ENCODE measurements at regions of chr3 and their contacts with region 1.

Region 1: DNA sequence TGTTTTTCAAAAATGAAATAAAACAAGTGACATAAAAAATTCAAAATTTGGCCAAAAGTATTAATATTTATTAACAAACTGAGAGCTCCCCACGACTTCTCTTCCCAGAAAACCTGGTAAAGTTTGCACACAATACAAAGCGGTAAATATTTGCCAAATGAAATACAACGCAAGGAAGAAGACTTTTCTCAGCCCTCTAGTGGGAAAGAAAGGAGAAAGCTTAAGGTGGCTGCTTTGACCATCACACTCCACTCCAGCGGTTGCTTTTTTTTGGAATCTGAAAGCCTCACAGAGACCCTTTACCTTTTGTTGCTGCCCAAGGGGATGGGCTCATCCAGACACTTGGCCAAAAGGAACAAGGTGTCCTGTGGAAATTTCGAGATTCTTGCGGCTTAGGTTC is 1.1 kb upstream of the GK5 start:
- DNase-seq: peak in 1 of 14 experiments; percentile 10
- ATAC-seq: no peak
- H3K4me3 ChIP-seq: no peak overlapping the region
- H3K4me3 Mint-ChIP-seq: peak overlapping the region; percentile 95
- H3K27ac ChIP-seq: no peak overlapping the region
- H3K27ac Mint-ChIP-seq: no peak overlapping the region
- H3K4me1 ChIP-seq: peaks cover 10% of the 10 kb centered on the region
- H3K4me1 Mint-ChIP-seq: peaks cover 22% of the 10 kb centered on the region
- H3K27me3 ChIP-seq: no peaks in the 10 kb centered on the region
- H3K27me3 Mint-ChIP-seq: no peaks in the 10 kb centered on the region
- CTCF ChIP-seq: no peak

Region 2: GRCh38 chr3:142028243-142028777 is 198.2 kb before region 1 on chr3:
- CTCF ChIA-PET with region 1: no interaction called
- POLR2A ChIA-PET with region 1: no interaction called
- intact Hi-C with region 1: loop called in 1 of 2 experiments (anchors 10 kb)
- DNase-seq: peak in 5 of 14 experiments; percentile 10 to 70 (median 63)
- ATAC-seq: peak; percentile 88
- H3K4me3 ChIP-seq: peak overlapping the region; percentile 42
- H3K4me3 Mint-ChIP-seq: peak overlapping the region; percentile 96
- H3K27ac ChIP-seq: no peak overlapping the region
- H3K27ac Mint-ChIP-seq: peak overlapping the region; percentile 46
- H3K4me1 ChIP-seq: no peaks in the 10 kb centered on the region
- H3K4me1 Mint-ChIP-seq: peaks cover 36% of the 10 kb centered on the region
- H3K27me3 ChIP-seq: no peaks in the 10 kb centered on the region
- H3K27me3 Mint-ChIP-seq: no peaks in the 10 kb centered on the region
- CTCF ChIP-seq: no peak

Region 3: DNA sequence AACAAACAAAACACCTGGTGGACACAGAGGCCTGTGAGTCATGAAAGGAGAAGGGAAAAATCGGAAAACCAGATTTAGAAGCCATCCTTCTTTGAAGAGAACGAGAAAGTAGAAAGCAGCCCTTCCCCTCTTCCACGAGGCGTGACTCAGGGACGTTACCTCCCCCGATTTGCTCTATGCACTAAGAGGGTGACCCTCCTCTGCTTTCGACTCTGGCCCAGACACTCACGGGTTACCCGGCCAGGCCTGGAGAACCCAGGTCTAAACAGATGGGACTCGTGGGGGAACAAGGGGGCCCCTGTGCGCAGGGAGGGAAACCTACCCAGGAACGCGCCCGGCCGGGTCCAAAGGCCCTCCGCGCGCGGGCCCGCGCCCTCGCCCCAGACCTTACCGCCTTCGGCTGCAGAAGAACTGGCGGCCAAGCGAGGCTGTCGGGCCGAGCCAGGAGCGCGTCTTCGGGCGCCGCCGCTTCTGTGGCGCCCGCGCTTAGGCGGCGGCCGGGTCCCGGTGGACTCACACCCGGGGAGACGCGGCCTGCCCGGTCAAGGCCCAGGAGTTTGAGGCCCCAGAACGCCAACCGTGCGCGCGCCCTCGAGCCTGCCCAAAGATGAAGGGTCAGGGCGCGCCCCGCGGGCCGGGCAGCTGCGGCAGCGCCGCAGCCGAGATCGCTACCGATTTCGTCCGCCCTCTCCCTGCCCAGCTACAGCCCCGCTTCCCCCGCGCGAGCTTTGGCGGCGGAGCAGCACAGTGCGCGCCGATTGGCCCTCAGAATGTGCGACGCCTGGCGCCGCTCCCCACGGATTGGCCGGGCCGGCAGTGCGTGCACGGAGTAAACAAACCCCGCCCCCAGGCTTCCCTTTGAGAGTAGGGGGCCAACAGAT is 77.5 kb before region 1 on chr3 and contains the start of gene TFDP2:
- CTCF ChIA-PET with region 1: no interaction called
- POLR2A ChIA-PET with region 1: interaction called, 3 read pairs
- intact Hi-C with region 1: loop called in 1 of 2 experiments (anchors 5 kb)
- DNase-seq: peak; percentile 66 to 92 (median 81)
- ATAC-seq: peak; percentile 99
- H3K4me3 ChIP-seq: peak within 1 kb of the TSS; percentile 70
- H3K4me3 Mint-ChIP-seq: peak within 1 kb of the TSS; percentile 97
- H3K27ac ChIP-seq: peak within 1 kb of the TSS in 1 of 2 donors; percentile 16
- H3K27ac Mint-ChIP-seq: peak within 1 kb of the TSS; percentile 77
- H3K4me1 ChIP-seq: peaks cover 16% of the 10 kb centered on the region
- H3K4me1 Mint-ChIP-seq: peaks cover 33% of the 10 kb centered on the region
- H3K27me3 ChIP-seq: no peaks in the 10 kb centered on the region
- H3K27me3 Mint-ChIP-seq: no peaks in the 10 kb centered on the region
- CTCF ChIP-seq: no peak
- total RNA-seq, gene TFDP2: 33.1 to 34.2 TPM

Region 4: DNA sequence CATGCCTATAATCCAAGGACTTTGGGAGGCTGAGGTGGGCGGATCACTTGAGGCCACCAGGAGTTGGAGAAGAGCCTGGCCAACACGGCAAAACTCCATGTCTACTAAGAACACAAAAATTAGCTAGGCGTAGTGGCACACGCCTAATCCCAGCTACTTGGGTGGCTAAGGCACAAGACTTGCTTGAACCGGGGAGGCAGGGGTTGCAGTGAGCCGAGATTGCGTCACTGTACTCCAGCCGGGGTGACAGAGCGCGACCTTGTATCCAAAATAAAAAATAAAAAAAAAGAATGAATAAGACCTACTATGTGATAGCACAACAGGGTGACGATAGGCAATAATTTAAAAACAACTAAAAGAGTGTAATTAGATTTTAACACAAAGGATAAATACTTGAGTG is 217.9 kb after region 1 on chr3:
- CTCF ChIA-PET with region 1: no interaction called
- POLR2A ChIA-PET with region 1: no interaction called
- intact Hi-C with region 1: no loop called
- DNase-seq: no peak
- ATAC-seq: no peak
- H3K4me3 ChIP-seq: no peak overlapping the region
- H3K4me3 Mint-ChIP-seq: no peak overlapping the region
- H3K27ac ChIP-seq: no peak overlapping the region
- H3K27ac Mint-ChIP-seq: no peak overlapping the region
- H3K4me1 ChIP-seq: peaks cover 28% of the 10 kb centered on the region
- H3K4me1 Mint-ChIP-seq: peaks cover 86% of the 10 kb centered on the region
- H3K27me3 ChIP-seq: no peaks in the 10 kb centered on the region
- H3K27me3 Mint-ChIP-seq: no peaks in the 10 kb centered on the region
- CTCF ChIP-seq: no peak

Region 5: DNA sequence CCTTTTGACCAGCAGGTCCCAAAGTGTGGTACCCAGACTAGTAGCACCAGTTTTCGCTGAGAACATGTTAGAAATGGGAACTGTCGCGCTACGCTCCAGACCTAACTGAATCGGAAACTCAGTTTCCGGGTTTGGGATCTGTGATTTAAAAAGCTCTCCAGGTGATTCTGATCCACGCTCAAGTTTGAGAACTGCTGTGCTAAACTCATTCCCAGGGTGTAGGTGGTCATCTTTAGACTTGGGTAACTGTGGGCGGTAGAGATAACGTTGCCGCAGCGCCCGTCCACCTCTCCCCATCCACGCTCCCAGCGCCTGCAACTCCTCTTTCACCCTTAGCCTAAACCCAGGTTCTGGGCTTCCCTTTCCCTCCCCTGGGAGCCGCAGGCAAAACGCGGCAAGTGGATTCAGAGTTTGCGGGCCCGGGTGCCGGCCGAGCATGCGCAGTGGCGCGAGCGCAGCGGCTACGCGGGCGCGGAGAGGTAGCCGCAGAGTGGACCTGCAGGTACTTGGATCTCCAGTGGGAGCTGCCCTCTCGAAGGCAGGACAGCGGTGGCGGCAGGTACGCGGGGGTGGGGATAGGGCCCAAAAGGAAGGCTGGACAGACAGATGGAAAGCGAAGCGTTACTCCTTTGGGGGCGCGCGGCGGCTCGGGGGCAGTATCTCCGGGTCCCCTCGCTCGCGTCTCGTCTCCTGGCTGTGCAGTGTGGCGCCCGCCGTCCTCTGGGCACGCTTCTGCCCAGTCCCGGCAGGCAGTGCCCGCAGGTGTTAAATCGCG is 369.7 kb after region 1 on chr3 and contains the start of gene PLS1:
- CTCF ChIA-PET with region 1: no interaction called
- POLR2A ChIA-PET with region 1: no interaction called
- intact Hi-C with region 1: loop called in 1 of 2 experiments (anchors 5 kb)
- DNase-seq: peak; percentile 68 to 91 (median 82)
- ATAC-seq: peak; percentile 91
- H3K4me3 ChIP-seq: peak within 1 kb of the TSS; percentile 62
- H3K4me3 Mint-ChIP-seq: peak within 1 kb of the TSS; percentile 97
- H3K27ac ChIP-seq: no peak within 1 kb of the TSS
- H3K27ac Mint-ChIP-seq: peak within 1 kb of the TSS; percentile 53
- H3K4me1 ChIP-seq: peaks cover 13% of the 10 kb centered on the region
- H3K4me1 Mint-ChIP-seq: peaks cover 18% of the 10 kb centered on the region
- H3K27me3 ChIP-seq: no peaks in the 10 kb centered on the region
- H3K27me3 Mint-ChIP-seq: peaks cover 6% of the 10 kb centered on the region
- CTCF ChIP-seq: no peak
- total RNA-seq, gene PLS1: 0.63 to 0.92 TPM

Measured in CD4-positive, alpha-beta T cell (primary cell).